Activated T-helper 2 cell treated with anti-CD3 and anti-CD28 coated beads, Interferon-gamma antibody, Interleukin-2, Interleukin-4, amounts not matched to agents 10 μg/mL and 5 μg/mL and 100 μg/mL, durations not matched to agents 14 hours and 24 hours and 36 hours (primary cell): ENCODE measurements at regions of chr5 and their contacts with region 1.

Region 1: GRCh38 chr5:32232441-32233219 is 58.5 kb upstream of the GOLPH3 start:
- DNase-seq: peak; percentile 63
- H3K4me3 Mint-ChIP-seq: no peak overlapping the region
- H3K27ac Mint-ChIP-seq: peak overlapping the region; percentile 82
- H3K4me1 Mint-ChIP-seq: peaks cover 25% of the 10 kb centered on the region
- H3K27me3 Mint-ChIP-seq: no peaks in the 10 kb centered on the region

Region 2: GRCh38 chr5:32193591-32193990 is 39.0 kb before region 1 on chr5:
- intact Hi-C with region 1: no loop called
- DNase-seq: no peak
- H3K4me3 Mint-ChIP-seq: no peak overlapping the region
- H3K27ac Mint-ChIP-seq: no peak overlapping the region
- H3K4me1 Mint-ChIP-seq: peaks cover 6% of the 10 kb centered on the region
- H3K27me3 Mint-ChIP-seq: peaks cover 4% of the 10 kb centered on the region

Region 3: GRCh38 chr5:32217886-32218396 is 14.7 kb before region 1 on chr5:
- intact Hi-C with region 1: no loop called
- DNase-seq: no peak
- H3K4me3 Mint-ChIP-seq: no peak overlapping the region
- H3K27ac Mint-ChIP-seq: no peak overlapping the region
- H3K4me1 Mint-ChIP-seq: peaks cover 6% of the 10 kb centered on the region
- H3K27me3 Mint-ChIP-seq: no peaks in the 10 kb centered on the region

Region 4: DNA sequence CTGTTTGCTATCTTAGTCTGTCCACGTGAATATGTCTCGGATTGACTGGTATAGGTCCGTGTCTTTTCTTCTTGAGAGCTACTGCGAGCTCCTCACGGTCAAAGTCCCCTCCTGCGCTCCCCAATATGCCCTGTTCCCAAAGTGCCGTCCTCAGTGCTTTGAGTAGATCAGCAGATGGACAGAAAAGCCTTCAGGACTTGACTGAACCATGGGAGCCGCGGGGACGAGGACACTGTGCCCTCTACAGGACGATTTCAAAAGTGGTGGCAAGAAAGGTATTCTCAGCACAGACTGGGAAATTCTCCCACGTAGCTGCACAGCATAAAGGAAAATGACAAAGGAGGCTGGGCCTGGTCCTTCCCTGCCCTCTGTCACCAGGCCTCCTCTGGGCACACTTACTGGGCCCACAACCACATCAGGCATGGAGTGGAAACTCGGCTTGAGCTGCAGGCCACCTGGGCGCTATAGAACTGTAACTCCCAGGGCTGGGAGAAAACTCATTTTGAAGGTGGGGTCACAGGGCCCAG is 96.7 kb after region 1 on chr5:
- intact Hi-C with region 1: loop called (anchors 1 kb)
- DNase-seq: peak; percentile 35
- H3K4me3 Mint-ChIP-seq: no peak overlapping the region
- H3K27ac Mint-ChIP-seq: no peak overlapping the region
- H3K4me1 Mint-ChIP-seq: peaks cover 4% of the 10 kb centered on the region
- H3K27me3 Mint-ChIP-seq: no peaks in the 10 kb centered on the region

Region 5: DNA sequence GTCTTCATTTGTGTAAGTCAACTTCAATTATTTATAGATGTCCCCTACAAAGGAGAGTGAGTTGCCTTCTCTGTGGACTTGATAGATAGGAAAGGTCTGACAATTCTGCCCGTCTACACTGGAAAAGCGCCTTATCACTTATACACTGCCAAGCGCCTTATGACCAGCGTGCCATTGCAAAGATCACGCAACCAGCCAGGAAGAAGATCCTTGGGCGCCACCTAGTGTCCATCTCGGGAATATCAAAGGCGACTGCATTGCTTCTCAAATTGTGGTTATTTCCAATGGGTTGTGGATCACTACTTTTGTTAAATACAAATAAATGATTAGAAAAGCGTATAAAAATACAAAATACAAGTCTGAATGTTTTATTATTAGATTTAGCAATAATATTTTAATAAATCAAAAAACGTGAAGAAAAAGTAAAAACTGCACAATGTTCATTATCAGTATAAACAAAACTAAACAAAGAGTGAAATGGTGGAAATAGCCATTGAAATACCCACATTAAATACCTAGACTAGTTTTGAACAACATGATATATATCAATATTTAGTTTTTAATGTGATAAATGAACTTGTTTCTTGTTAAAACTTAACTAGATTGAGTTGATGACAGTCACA is 380.5 kb after region 1 on chr5:
- intact Hi-C with region 1: loop called (anchors 2 kb)
- DNase-seq: peak; percentile 72
- H3K4me3 Mint-ChIP-seq: no peak overlapping the region
- H3K27ac Mint-ChIP-seq: no peak overlapping the region
- H3K4me1 Mint-ChIP-seq: peaks cover 5% of the 10 kb centered on the region
- H3K27me3 Mint-ChIP-seq: no peaks in the 10 kb centered on the region